Naive thymus-derived CD4-positive, alpha-beta T cell (primary cell): ENCODE measurements at regions of chr11 and their contacts with region 1.

Region 1: DNA sequence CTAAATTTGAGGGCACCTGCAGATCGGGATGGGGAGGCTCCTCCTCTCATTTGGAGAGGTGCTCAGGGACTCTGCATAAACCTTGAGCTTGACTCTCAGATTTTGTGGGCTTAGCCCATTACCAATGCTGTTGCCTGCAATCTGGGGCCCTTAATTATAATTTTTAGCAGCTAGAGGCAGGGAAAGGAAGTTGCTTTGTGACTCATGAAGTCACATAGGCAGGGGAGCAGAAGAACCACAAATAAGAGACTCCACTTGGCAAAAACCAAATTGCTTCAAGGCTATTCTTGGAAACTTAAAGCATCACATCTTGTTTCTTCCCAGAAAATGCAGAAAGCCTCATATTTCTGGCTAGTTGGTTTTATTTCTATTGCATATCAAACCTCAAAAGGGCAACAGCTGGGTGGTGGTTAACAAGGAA is 46.9 kb downstream of the MICAL2 start:
- DNase-seq: no peak
- ATAC-seq: peak; percentile 36
- H3K4me3 ChIP-seq: no peak overlapping the region
- H3K4me3 Mint-ChIP-seq: peak overlapping the region in 2 of 10 donors; percentile 23 to 51
- H3K27ac ChIP-seq: no peak overlapping the region
- H3K27ac Mint-ChIP-seq: peak overlapping the region in 5 of 9 donors; percentile 15 to 86 (median 46)
- H3K4me1 ChIP-seq: peaks cover 15% of the 10 kb centered on the region in 2 donors
- H3K4me1 Mint-ChIP-seq: peaks cover 15 to 87% (median 22%) of the 10 kb centered on the region in 7 donors
- H3K27me3 ChIP-seq: no peaks in the 10 kb centered on the region
- H3K27me3 Mint-ChIP-seq: no peaks in the 10 kb centered on the region

Region 2: DNA sequence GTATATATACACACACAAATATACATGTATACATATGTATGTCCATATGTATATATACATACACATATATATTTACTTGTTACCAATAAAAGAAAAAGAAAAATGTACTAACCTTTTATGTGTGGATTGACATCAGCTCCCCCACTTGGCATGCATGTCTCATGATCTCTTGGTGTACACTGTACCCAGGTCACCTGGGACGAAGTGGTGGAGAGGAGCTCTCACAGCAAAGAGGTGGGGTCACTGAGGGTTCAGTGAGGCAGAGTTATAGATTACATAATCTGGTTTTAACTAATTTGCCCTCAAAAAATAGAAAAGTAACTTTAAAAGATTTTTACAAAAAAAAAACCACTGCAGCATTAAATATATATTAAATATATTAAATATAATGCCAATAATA is 331.0 kb before region 1 on chr11:
- CTCF ChIA-PET with region 1: no interaction called
- POLR2A ChIA-PET with region 1: no interaction called
- intact Hi-C with region 1: no loop called
- DNase-seq: peak in 1 of 9 donors; percentile 39
- ATAC-seq: no peak
- H3K4me3 ChIP-seq: no peak overlapping the region
- H3K4me3 Mint-ChIP-seq: no peak overlapping the region
- H3K27ac ChIP-seq: no peak overlapping the region
- H3K27ac Mint-ChIP-seq: no peak overlapping the region
- H3K4me1 ChIP-seq: no peaks in the 10 kb centered on the region
- H3K4me1 Mint-ChIP-seq: peaks cover 0 to 4% (median 0%) of the 10 kb centered on the region in 7 donors
- H3K27me3 ChIP-seq: no peaks in the 10 kb centered on the region
- H3K27me3 Mint-ChIP-seq: peaks cover 0 to 12% (median 0%) of the 10 kb centered on the region in 5 donors

Region 3: DNA sequence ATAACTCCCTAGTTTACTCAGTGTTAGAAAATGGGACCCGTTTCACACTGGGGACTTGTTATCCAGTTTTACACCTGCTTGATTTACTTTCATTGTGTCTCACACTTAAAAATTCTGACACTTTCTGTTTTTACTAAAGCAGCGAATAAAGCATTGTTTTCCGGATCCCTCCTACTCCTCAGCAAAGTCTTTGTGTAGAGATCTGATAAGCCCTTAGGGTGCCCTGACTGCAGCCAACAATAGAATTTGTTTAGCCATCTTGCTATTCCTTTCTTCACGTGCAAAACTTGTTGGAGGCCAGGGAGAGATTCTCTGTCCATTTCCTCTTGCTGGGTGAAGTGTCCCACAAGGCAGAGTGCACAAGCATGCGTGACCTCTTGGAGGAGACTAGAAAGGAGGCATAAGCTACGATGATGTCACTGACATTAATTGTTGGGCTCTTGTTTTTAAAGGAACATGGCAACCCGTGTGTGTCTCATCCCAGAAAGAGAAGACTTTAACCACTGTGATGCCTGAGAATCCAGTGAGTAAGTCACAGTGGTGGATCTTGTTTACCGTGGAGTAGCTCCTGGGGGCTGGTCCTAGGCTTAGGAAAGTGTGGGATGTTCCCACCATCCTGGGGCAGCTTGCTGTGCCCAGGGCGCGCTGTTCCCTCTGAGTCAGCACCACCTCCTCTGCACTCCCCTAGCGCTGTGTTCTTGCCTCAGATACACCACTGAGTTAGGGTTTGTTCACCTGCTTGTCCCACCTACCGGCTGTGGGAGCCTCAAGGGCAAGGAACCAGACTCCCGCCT is 19.1 kb before region 1 on chr11:
- CTCF ChIA-PET with region 1: interaction called, 5 read pairs
- POLR2A ChIA-PET with region 1: interaction called, 3 read pairs
- intact Hi-C with region 1: loop called in 1 of 2 experiments (anchors 2 kb)
- DNase-seq: no peak
- ATAC-seq: no peak
- H3K4me3 ChIP-seq: no peak overlapping the region
- H3K4me3 Mint-ChIP-seq: peak overlapping the region in 2 of 10 donors; percentile 11 to 42
- H3K27ac ChIP-seq: no peak overlapping the region
- H3K27ac Mint-ChIP-seq: peak overlapping the region in 3 of 9 donors; percentile 36 to 82 (median 63)
- H3K4me1 ChIP-seq: peaks cover 2 to 38% of the 10 kb centered on the region in 2 donors
- H3K4me1 Mint-ChIP-seq: peaks cover 40 to 67% (median 58%) of the 10 kb centered on the region in 7 donors
- H3K27me3 ChIP-seq: no peaks in the 10 kb centered on the region
- H3K27me3 Mint-ChIP-seq: no peaks in the 10 kb centered on the region

Region 4: DNA sequence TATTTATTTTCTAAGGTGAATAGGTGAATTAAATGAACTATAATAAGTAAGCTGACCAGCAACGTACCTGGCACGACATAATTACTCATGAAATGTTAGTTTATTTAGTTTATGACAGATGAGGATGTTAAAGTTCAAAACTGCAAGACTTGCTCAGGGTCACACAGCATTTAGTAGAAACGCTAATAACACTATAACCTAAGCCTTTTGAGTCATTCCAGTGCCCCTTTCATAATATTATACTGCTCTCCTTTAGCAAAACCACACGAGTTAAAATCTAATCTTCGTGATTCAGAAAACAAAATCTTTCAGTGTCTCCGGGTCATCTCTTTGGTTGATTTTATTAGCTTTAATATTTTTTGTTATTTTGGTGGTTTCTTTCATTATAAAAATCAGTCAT is 1266.1 kb after region 1 on chr11:
- CTCF ChIA-PET with region 1: no interaction called
- POLR2A ChIA-PET with region 1: no interaction called
- intact Hi-C with region 1: no loop called
- DNase-seq: no peak
- ATAC-seq: no peak
- H3K4me3 ChIP-seq: no peak overlapping the region
- H3K4me3 Mint-ChIP-seq: no peak overlapping the region
- H3K27ac ChIP-seq: no peak overlapping the region
- H3K27ac Mint-ChIP-seq: peak overlapping the region in 1 of 9 donors; percentile 3
- H3K4me1 ChIP-seq: no peaks in the 10 kb centered on the region
- H3K4me1 Mint-ChIP-seq: peaks cover 3 to 45% (median 36%) of the 10 kb centered on the region in 7 donors
- H3K27me3 ChIP-seq: no peaks in the 10 kb centered on the region
- H3K27me3 Mint-ChIP-seq: no peaks in the 10 kb centered on the region